ENCODE measurements at regions of chr15 and their contacts with region 1.

Region 1: GRCh38 chr15:89358755-89359439 is 24.3 kb upstream of the POLG start:
- DNase-seq: peak; percentile 57
- H3K4me3 ChIP-seq: peak overlapping the region; percentile 17 to 21
- H3K27ac ChIP-seq: no peak overlapping the region
- H3K4me1 ChIP-seq: peaks cover 5% of the 10 kb centered on the region
- H3K27me3 ChIP-seq: peaks cover 47% of the 10 kb centered on the region
- CTCF ChIP-seq: peak; percentile 97 to 100 (median 98)
- POLR2A ChIP-seq: no peak

Region 2: GRCh38 chr15:89430530-89431341 is 71.8 kb after region 1 on chr15:
- intact Hi-C with region 1: loop called (anchors 1 kb)
- DNase-seq: peak; percentile 73
- H3K4me3 ChIP-seq: peak overlapping the region; percentile 7 to 31
- H3K27ac ChIP-seq: no peak overlapping the region
- H3K4me1 ChIP-seq: no peaks in the 10 kb centered on the region
- H3K27me3 ChIP-seq: peaks cover 4% of the 10 kb centered on the region
- CTCF ChIP-seq: peak; percentile 95 to 99 (median 96)
- POLR2A ChIP-seq: no peak

Region 3: DNA sequence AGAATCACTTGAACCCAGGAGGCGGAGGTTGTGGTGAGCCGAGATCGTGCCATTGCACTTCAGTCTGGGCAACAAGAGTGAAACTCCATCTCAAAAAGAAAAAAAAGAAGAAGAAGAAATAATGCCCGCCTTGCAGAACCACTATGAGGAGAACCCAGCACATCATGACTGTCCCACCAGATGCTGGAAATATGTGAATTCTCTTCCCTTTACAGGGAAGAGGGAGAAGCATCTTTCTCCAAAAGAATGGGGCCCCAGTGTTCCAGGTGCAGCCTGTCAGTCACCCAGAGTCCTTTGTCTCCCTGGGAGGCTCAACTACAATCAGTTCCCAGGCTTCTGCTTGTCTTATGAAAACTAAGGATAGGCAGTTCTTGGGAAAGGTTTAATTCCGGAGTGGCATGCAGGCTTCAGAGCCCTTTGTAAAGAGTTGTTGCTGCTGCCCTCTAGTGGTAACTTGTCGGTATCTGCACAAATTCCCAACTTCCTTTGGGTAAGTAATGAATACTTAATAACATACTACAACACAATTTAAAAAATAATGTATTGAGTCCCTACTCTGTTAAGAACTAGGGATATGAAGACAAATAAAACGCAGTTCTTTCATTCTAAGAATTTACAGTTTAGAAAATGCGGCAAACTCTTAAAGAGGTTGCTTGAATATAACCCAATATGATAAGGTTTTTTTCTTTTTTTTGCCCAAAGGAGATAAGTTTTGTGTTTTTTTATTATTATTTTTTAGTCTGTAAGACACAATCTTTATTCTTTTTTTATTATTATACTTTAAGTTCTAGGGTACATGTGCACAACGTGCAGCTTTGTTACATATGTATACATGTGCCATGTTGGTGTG is 197.7 kb after region 1 on chr15:
- intact Hi-C with region 1: loop called (anchors 10 kb)
- DNase-seq: peak; percentile 64
- H3K4me3 ChIP-seq: no peak overlapping the region
- H3K27ac ChIP-seq: no peak overlapping the region
- H3K4me1 ChIP-seq: no peaks in the 10 kb centered on the region
- H3K27me3 ChIP-seq: no peaks in the 10 kb centered on the region
- CTCF ChIP-seq: peak; percentile 32 to 71 (median 64)
- POLR2A ChIP-seq: no peak